ENCODE measurements at regions of chr6 and their contacts with region 1.

Region 1: GRCh38 chr6:81451787-81452186 is 300.7 kb downstream of the TENT5A start:
- DNase-seq: peak; percentile 89
- H3K4me3 ChIP-seq: no peak overlapping the region
- H3K27ac ChIP-seq: 0 out of 2 replicates have a peak overlapping the region, but pooled peaks have one; percentile 6
- H3K4me1 ChIP-seq: peaks cover 17% of the 10 kb centered on the region
- H3K27me3 ChIP-seq: no peaks in the 10 kb centered on the region

Region 2: DNA sequence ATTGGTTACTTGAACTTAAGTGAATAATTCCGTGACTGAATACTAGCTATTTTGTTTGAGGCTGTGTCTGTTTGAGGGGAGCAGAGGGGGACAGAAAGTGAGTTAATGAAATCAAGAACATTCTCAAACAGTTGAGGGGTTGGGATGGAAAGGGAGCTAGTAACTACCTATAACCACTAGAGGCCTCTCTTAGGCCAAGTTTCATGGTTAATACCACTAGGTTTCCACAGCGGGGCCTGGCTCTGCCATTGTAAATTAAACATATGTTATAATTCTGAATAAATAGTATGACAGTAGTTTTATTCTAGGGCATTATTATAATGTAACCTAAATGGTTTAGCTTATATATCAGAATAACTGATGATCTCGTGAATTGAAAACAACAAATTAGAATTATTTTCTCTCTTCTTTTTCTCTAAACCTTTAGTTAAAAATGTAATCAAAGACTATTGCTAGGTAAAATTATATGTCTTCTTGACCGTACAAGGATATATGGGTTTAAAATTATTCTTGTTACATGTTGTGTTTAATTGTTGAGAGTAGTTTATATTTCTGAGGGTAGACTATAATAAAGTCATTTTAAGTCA is 1237.3 kb before region 1 on chr6:
- in situ Hi-C with region 1: loop called (anchors 25 kb)
- DNase-seq: peak; percentile 88
- H3K4me3 ChIP-seq: no peak overlapping the region
- H3K27ac ChIP-seq: peak overlapping the region; percentile 10; the same call in 1 of the 2 replicates
- H3K4me1 ChIP-seq: peaks cover 37% of the 10 kb centered on the region
- H3K27me3 ChIP-seq: no peaks in the 10 kb centered on the region

Region 3: DNA sequence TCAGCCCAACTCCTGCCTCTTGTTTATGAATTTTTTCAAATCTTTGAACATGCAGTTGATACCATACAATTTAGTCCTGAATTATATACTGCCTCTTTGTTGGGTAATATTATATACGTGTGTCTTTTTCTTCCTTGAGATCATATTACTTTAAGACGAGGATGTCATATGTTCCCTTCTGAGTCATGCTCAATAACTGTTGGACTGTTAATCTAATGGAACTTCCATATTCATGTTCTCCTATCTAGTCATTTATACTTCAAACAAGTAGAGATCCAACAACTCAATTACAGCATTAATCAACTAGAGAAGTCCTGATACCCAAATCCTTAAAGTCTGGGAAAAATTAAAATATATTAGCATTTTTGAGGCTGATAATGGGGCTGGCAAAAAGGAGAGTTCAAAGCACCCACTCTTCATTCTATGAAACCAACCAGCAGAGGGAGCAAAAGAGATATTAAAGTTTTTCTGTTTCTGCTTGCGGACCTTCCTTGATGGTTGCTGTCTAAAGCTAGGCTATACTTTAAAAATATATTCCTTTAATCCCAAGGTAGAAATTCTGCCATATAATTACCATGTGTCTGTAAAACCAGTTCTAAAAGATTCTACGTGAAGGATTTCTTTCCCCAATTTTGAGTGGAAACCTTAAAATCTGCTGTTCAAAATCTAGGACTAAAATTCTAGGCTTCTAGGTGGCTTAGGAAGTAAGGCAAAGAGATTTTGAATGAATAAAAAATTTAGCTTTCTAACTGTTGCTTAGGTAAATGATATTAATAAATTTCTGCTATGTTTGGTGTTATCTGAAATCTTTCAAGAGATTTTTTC is 846.4 kb before region 1 on chr6:
- in situ Hi-C with region 1: loop called (anchors 25 kb)
- DNase-seq: peak; percentile 55
- H3K4me3 ChIP-seq: no peak overlapping the region
- H3K27ac ChIP-seq: no peak overlapping the region
- H3K4me1 ChIP-seq: peaks cover 44% of the 10 kb centered on the region
- H3K27me3 ChIP-seq: no peaks in the 10 kb centered on the region

Region 4: DNA sequence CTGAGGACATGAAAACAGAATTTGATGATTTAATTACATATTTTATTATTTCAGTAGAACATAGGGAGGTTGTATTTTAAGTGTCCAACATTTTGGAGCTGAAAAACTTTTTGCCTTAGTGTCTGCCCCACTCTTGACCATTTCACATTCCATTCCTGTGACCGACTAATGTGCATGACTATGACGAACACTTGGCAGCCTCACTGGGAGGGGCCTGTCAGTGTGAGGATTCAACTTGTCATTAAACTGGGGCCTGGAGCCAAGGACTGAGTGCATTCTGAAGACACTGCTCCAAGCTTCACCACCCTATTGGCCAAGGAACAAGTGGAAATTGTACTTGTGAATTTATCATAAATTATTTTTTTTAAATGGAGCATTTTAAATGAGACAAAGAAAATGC is 684.0 kb before region 1 on chr6:
- in situ Hi-C with region 1: no loop called
- DNase-seq: peak; percentile 93
- H3K4me3 ChIP-seq: no peak overlapping the region
- H3K27ac ChIP-seq: peak overlapping the region; percentile 36
- H3K4me1 ChIP-seq: peaks cover 23% of the 10 kb centered on the region
- H3K27me3 ChIP-seq: no peaks in the 10 kb centered on the region

Region 5: DNA sequence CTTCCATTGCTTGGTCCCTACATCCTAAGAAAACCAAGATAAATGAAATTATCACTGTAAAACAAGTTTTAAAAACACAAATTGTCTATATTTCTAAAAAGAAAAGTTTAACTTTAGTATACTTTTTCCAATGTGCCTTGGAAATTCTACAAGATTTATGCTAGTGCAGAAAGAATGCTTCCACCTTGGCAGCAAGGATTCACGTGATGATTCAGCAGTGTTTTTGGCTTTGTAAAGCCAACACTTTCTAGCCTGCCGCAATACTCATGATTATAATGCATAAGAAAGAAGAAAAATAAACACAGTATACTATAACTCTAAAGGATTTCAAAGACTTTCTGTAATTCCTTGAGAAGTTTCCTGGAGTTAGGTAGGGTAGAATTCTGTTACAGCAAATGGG is 142.0 kb before region 1 on chr6:
- in situ Hi-C with region 1: no loop called
- DNase-seq: peak; percentile 35
- H3K4me3 ChIP-seq: no peak overlapping the region
- H3K27ac ChIP-seq: no peak overlapping the region
- H3K4me1 ChIP-seq: peaks cover 19% of the 10 kb centered on the region
- H3K27me3 ChIP-seq: no peaks in the 10 kb centered on the region

Region 6: DNA sequence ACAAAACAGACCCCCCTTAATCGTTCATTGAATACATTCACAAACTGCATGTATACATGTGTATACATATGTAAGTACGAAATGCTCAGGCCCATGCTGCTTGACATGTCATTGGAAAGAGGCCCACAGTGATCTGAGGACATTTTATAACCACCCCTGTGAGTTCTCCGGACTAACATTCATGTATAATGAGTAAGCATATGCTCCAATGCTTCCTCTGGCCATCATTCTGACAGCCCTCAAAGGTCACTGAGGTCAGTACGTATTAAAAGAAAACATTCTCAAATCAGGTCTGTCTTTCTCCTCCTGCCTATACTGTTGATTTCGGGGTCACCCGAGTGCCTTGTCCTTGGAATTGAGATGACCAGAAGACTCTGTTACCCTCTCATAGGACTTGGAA is 245.8 kb after region 1 on chr6:
- in situ Hi-C with region 1: no loop called
- DNase-seq: no peak
- H3K4me3 ChIP-seq: no peak overlapping the region
- H3K27ac ChIP-seq: no peak overlapping the region
- H3K4me1 ChIP-seq: no peaks in the 10 kb centered on the region
- H3K27me3 ChIP-seq: no peaks in the 10 kb centered on the region

Region 7: DNA sequence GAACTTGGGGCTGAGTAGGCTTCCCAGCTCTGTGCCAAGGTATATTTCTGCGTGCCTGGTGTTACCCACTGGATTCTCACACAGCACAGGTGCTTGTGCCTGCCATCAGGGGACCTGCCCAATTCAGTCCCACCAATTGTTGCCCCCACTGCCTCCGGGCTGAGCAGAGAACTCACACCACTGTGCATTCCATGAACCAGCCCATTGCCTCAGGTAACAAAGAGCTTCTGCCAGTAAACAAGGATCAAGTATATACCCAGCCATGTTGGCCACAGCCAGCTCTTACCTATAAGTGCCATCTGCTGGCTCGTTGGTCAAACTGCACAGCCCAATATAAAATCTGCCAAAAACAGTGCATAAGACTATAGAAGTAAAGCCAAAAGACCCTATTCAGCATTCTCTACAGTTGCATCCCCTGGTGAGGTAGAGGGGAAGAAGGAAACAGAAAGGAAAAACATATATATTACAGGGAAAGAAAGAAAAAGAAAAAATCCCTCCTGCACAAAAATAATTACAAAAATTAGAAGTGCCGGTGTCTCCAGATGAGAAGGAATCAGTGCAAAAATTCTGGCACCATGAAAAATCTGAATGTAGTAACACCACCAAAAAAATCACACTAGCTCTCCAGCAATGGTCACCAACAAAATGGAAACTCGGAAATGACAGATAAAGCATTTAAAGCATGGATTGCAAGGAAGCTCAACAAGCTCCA is 554.4 kb after region 1 on chr6:
- in situ Hi-C with region 1: loop called (anchors 25 kb)
- DNase-seq: peak; percentile 73
- H3K4me3 ChIP-seq: no peak overlapping the region
- H3K27ac ChIP-seq: no peak overlapping the region
- H3K4me1 ChIP-seq: no peaks in the 10 kb centered on the region
- H3K27me3 ChIP-seq: no peaks in the 10 kb centered on the region

Region 8: GRCh38 chr6:82275686-82276085 is 823.9 kb after region 1 on chr6:
- in situ Hi-C with region 1: no loop called
- DNase-seq: no peak
- H3K4me3 ChIP-seq: no peak overlapping the region
- H3K27ac ChIP-seq: no peak overlapping the region
- H3K4me1 ChIP-seq: no peaks in the 10 kb centered on the region
- H3K27me3 ChIP-seq: no peaks in the 10 kb centered on the region

Measured in GM23248 (cell line).